ENCODE measurements at regions of chr6 and their contacts with region 1.

Region 1: GRCh38 chr6:154156135-154156896 is 117.3 kb downstream of the OPRM1 start:
- DNase-seq: peak; percentile 28
- H3K4me3 ChIP-seq: no peak overlapping the region
- H3K27ac ChIP-seq: no peak overlapping the region
- H3K4me1 ChIP-seq: no peaks in the 10 kb centered on the region
- CTCF ChIP-seq: peak; percentile 72

Region 2: GRCh38 chr6:153725456-153725855 is 430.9 kb before region 1 on chr6:
- CTCF ChIA-PET with region 1: no interaction called
- POLR2A ChIA-PET with region 1: no interaction called
- intact Hi-C with region 1: no loop called
- DNase-seq: no peak
- H3K4me3 ChIP-seq: no peak overlapping the region
- H3K27ac ChIP-seq: no peak overlapping the region
- H3K4me1 ChIP-seq: no peaks in the 10 kb centered on the region
- CTCF ChIP-seq: no peak

Region 3: GRCh38 chr6:154030646-154031045 is 125.7 kb before region 1 on chr6:
- CTCF ChIA-PET with region 1: no interaction called
- POLR2A ChIA-PET with region 1: no interaction called
- intact Hi-C with region 1: no loop called
- DNase-seq: no peak
- H3K4me3 ChIP-seq: no peak overlapping the region
- H3K27ac ChIP-seq: no peak overlapping the region
- H3K4me1 ChIP-seq: no peaks in the 10 kb centered on the region
- CTCF ChIP-seq: no peak

Region 4: DNA sequence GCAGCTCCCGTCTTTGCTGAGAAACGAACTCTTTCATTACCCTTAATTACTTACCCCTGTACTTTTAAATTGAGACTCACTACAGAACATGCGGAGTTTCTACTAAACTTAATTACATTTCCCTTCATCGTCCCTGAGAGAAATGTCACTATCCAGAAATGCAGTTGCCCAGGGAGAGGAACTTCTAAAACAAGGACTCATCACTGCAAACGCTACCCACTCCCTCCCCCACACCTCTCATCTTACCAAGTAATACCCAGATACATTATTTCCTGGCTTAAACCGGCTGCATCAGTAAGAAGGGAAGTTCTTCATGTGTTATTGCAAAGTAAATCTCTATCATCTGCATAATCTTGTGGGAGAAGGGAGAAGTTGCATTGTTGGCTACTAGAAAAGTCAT is 62.0 kb after region 1 on chr6:
- CTCF ChIA-PET with region 1: no interaction called
- POLR2A ChIA-PET with region 1: no interaction called
- intact Hi-C with region 1: no loop called
- DNase-seq: no peak
- H3K4me3 ChIP-seq: no peak overlapping the region
- H3K27ac ChIP-seq: no peak overlapping the region
- H3K4me1 ChIP-seq: no peaks in the 10 kb centered on the region
- CTCF ChIP-seq: no peak

Region 5: DNA sequence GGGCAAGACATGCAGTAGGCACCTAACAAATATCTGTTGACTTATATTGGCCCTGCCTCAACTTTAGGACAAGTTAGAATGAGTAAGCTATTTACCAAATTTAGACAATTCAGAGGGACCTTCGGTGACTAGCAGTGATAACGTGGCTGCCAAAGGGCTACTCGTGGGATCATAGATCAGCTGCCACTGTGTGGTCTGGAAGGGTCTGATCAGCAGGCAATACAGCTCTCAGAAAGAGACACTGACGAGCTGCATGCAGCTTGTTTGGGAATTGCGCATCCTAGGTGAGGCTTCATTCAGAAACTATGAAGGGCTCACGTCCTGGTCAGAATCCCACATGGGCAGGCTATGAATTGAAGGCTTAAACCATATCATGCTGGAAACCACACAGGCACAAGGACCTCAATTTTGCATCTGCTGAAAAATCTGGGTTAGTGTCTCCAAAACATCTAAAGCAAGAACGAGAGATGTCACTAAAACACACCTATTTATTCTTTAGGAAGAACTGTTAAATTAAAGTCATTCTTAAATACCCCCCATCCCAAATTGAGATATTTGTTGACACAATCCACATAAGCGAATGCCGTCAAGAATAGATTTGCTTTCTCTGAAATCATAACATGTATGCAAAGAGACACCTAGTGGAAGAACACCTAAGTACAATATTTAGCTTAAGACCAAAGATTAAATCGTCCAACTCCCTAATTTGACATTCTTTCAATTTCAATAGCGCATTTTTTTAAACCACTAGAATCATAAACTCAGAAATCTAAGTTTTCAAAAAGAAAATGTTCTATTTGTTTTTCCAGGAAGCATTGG is 120.7 kb after region 1 on chr6:
- CTCF ChIA-PET with region 1: no interaction called
- POLR2A ChIA-PET with region 1: no interaction called
- intact Hi-C with region 1: loop called (anchors 1 kb)
- DNase-seq: peak; percentile 43
- H3K4me3 ChIP-seq: no peak overlapping the region
- H3K27ac ChIP-seq: no peak overlapping the region
- H3K4me1 ChIP-seq: no peaks in the 10 kb centered on the region
- CTCF ChIP-seq: peak; percentile 82

Region 6: DNA sequence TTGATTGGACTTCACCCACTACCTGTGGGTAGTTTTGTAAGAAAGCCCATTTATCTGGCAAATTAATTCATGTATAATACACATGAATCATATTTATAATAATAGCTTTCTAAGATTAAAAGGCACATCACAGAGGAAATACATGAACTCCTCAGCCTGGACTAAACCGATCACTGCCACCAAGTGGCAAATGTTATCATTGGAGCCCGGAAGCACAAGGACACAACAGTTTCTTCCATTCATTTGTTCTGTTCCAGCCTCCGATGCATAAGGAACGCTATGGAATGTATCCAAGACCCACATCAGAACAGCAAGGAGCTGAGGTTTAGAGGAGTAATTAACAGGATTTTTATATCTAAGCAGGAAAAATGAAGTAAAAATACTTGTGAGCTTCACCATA is 214.2 kb after region 1 on chr6:
- CTCF ChIA-PET with region 1: no interaction called
- POLR2A ChIA-PET with region 1: no interaction called
- intact Hi-C with region 1: loop called (anchors 10 kb)
- DNase-seq: peak; percentile 5
- H3K4me3 ChIP-seq: no peak overlapping the region
- H3K27ac ChIP-seq: no peak overlapping the region
- H3K4me1 ChIP-seq: no peaks in the 10 kb centered on the region
- CTCF ChIP-seq: peak; percentile 70

Region 7: GRCh38 chr6:154408891-154409500 is 252.7 kb after region 1 on chr6:
- CTCF ChIA-PET with region 1: no interaction called
- POLR2A ChIA-PET with region 1: no interaction called
- intact Hi-C with region 1: loop called (anchors 10 kb)
- DNase-seq: peak; percentile 11
- H3K4me3 ChIP-seq: no peak overlapping the region
- H3K27ac ChIP-seq: no peak overlapping the region
- H3K4me1 ChIP-seq: no peaks in the 10 kb centered on the region
- CTCF ChIP-seq: 0 out of 2 replicates have a peak, but pooled peaks have one; percentile 28

Measured in OCI-LY7 (cell line).